Vagina (tissue), 2 donors: ENCODE measurements at regions of chr3 and their contacts with region 1.

Region 1: DNA sequence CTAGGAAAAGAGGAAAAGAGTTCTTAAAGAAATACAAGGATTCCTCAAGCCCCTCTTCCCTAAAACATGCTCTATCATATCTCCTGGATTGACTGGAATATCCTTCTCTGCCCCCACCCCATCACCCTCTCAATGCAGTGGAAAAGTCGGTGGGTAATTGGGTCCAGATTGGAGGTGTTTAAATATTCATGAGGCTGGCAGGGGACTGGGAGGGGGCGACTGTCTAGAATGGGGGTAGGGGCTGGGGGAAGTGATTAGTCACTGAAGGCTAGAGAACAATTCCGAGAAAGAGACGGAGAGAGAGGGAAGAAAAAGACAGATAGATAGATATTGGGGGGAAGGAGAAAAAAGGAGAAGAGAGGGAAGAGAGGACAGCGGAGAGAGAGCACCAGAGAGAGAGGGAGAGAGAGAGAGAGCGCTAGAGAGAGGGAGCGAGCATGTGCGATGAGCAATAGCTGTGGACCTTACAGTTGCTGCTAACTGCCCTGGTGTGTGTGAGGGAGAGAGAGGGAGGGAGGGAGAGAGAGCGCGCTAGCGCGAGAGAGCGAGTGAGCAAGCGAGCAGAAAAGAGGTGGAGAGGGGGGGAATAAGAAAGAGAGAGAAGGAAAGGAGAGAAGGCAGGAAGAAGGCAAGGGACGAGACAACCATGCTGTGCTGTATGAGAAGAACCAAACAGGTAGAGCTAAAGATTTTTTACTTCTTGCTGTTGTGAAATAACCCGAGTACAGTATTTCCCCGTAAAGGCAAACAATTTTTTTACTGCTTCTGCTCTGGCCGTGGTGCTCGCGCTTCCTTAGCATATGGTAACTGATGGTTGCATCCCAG is at the start of gene GAP43:
- DNase-seq: no peak
- H3K4me3 ChIP-seq: peak within 1 kb of the TSS; percentile 11
- H3K27ac ChIP-seq: no peak within 1 kb of the TSS
- H3K4me1 ChIP-seq: peaks cover 8% of the 10 kb centered on the region
- H3K27me3 ChIP-seq: peaks cover 4% of the 10 kb centered on the region
- CTCF ChIP-seq: no peak
- POLR2A ChIP-seq: no peak
- total RNA-seq, gene GAP43: 4.9 TPM

Region 2: DNA sequence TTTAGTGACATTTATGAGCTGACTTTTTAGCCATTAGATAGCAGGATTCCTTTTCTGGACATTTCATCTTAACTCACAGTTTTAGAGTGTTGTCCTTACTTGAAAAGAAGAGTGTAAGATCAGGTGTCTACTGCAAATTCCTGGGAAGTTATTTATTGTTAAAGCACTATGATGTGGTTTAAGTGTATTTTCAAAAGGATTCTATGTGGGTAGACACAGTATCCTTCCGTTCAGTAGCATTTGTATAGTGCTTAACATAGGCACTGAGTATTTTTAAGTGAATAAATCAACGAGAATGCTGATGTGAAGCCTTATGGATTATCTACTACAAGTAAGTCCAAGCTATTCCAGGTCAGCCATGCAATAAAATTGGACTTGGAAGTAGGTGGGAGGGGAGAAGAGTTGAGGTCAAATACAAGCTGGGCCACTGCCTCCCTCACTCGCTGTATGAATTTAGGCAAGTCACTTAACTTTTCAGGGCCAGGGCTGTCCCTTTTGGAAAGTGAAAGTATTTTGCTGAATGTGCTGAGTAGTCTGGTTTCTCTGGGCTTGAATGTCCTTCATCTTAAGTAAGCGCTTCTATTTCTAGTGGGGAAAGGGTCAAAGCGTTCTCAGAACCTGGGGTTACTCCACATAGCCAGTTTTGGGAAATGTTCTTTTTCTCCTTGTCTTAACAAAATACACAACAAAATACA is 48.7 kb after region 1 on chr3:
- intact Hi-C with region 1: loop called (anchors 5 kb)
- DNase-seq: no peak
- H3K4me3 ChIP-seq: no peak overlapping the region
- H3K27ac ChIP-seq: no peak overlapping the region
- H3K4me1 ChIP-seq: no peaks in the 10 kb centered on the region
- H3K27me3 ChIP-seq: no peaks in the 10 kb centered on the region
- CTCF ChIP-seq: no peak
- POLR2A ChIP-seq: no peak

Region 3: DNA sequence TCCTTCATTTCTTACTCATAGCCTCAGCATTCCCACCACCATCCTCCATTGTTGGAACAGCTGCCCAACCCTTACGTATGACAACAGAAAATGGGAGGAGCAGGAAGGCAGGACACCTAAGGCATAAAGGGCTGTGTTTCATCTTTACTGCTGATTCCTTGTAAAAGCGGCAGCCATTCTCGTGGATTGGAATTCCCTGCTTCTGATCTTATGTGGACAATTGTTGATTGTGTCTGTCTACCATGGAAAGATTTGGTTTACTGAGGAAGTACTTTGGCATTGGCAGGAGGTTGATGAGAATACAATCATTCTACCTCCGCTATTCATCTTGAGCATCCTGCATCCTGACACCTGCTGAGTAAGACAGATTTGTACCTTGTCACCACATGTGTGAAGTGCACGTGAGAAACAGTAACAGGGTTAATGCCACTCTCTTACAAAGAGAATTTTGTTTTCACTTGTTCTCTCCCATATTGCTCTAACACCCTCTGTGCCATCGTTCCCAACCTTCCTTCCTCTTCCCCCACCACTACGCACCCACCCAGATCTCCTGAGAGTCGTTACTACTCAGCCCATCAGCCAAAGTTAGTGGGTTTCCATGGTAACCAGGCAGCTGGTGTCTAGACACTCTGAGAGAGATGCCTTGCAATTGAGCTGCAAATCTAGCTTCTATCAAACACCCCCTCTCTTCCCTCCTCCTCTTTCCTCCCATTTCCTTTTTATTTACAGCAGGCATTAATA is 75.8 kb after region 1 on chr3:
- intact Hi-C with region 1: no loop called
- DNase-seq: no peak
- H3K4me3 ChIP-seq: no peak overlapping the region
- H3K27ac ChIP-seq: no peak overlapping the region
- H3K4me1 ChIP-seq: no peaks in the 10 kb centered on the region
- H3K27me3 ChIP-seq: no peaks in the 10 kb centered on the region
- CTCF ChIP-seq: no peak
- POLR2A ChIP-seq: no peak